IMR-90 (cell line): ENCODE measurements at regions of chr15 and their contacts with region 1.

Region 1: GRCh38 chr15:90320061-90320884 is 31.8 kb upstream of the ZNF774 start:
- DNase-seq: peak; percentile 90
- ATAC-seq: peak; percentile 98
- H3K4me3 ChIP-seq: no peak overlapping the region
- H3K27ac ChIP-seq: no peak overlapping the region
- H3K4me1 ChIP-seq: peaks cover 6% of the 10 kb centered on the region
- H3K27me3 ChIP-seq: no peaks in the 10 kb centered on the region
- CTCF ChIP-seq: peak; percentile 100
- POLR2A ChIP-seq: peak; percentile 53; the same call in 1 of the 2 replicates
- RAD21 ChIP-seq: peak; percentile 100

Region 2: GRCh38 chr15:90265271-90266060 is 54.8 kb before region 1 on chr15 and contains the start of gene NGRN:
- CTCF ChIA-PET with region 1: interaction called, 3 read pairs
- POLR2A ChIA-PET with region 1: interaction called, 13 read pairs
- dilution Hi-C with region 1: no loop called
- in situ Hi-C with region 1: no loop called
- intact Hi-C with region 1: no loop called
- DNase-seq: peak; percentile 88
- ATAC-seq: peak; percentile 92
- H3K4me3 ChIP-seq: peak within 1 kb of the TSS; percentile 90
- H3K27ac ChIP-seq: peak within 1 kb of the TSS; percentile 96
- H3K4me1 ChIP-seq: peaks cover 7% of the 10 kb centered on the region
- H3K27me3 ChIP-seq: no peaks in the 10 kb centered on the region
- CTCF ChIP-seq: no peak
- POLR2A ChIP-seq: peak; percentile 82
- RAD21 ChIP-seq: no peak
- total RNA-seq, gene NGRN: 39.6 and 44.2 TPM in 2 replicates

Region 3: DNA sequence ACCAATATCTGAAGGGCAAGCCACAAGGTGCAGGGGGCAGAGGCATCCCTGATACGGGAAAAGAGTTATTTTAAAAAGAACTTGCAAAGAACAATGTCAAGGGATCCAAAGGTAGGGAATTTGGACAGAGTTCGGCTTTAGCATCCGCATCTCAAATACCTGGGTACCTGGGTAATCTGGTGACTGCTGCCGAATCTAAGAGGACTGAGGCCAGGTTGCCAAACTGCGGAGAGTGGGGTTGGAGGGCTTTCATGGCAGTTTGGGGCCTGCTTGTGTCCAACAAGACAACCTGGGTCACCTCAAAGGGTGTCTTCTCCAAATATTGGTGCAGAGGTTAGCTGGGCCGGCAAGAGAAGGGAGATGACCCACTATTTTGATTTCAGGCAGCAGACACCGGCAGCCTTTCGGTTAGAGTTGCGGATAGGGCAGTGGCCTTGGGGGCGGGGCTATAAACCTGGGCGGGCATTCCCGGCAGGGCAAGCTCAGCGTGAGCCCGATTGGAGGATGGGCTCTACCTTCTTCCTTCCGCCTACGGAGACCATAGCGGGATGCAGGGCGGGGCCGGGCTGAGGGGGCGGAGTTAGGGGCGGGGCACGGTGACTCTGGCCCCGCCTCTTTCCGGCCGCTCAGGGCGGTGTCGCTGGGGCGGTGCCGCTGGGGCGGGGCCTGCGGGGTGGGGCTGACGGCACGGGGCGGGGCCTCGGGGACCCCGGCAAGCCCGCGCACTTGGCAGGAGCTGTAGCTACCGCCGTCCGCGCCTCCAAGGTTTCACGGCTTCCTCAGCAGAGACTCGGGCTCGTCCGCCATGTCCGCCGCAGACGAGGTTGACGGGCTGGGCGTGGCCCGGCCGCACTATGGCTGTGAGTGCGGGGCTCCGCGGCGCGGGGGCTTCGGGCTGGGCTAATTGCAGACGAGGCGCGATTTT is 67.5 kb after region 1 on chr15 and contains the start of gene IQGAP1:
- CTCF ChIA-PET with region 1: interaction called, 4 read pairs
- POLR2A ChIA-PET with region 1: no interaction called
- dilution Hi-C with region 1: no loop called
- in situ Hi-C with region 1: no loop called
- intact Hi-C with region 1: loop called (anchors 1 kb)
- DNase-seq: peak; percentile 94
- ATAC-seq: peak; percentile 98
- H3K4me3 ChIP-seq: peak within 1 kb of the TSS; percentile 80
- H3K27ac ChIP-seq: peak within 1 kb of the TSS; percentile 74
- H3K4me1 ChIP-seq: peaks cover 7% of the 10 kb centered on the region
- H3K27me3 ChIP-seq: no peaks in the 10 kb centered on the region
- CTCF ChIP-seq: no peak
- POLR2A ChIP-seq: peak; percentile 85
- RAD21 ChIP-seq: 0 out of 2 replicates have a peak, but pooled peaks have one; percentile 12
- total RNA-seq, gene IQGAP1: 207 and 246 TPM in 2 replicates

Region 4: GRCh38 chr15:90451053-90451850 is 131.0 kb after region 1 on chr15:
- CTCF ChIA-PET with region 1: no interaction called
- POLR2A ChIA-PET with region 1: no interaction called
- dilution Hi-C with region 1: no loop called
- in situ Hi-C with region 1: no loop called
- intact Hi-C with region 1: no loop called
- DNase-seq: peak; percentile 87
- ATAC-seq: peak; percentile 68
- H3K4me3 ChIP-seq: no peak overlapping the region
- H3K27ac ChIP-seq: no peak overlapping the region
- H3K4me1 ChIP-seq: peaks cover 8% of the 10 kb centered on the region
- H3K27me3 ChIP-seq: no peaks in the 10 kb centered on the region
- CTCF ChIP-seq: no peak
- POLR2A ChIP-seq: no peak
- RAD21 ChIP-seq: no peak

Region 5: DNA sequence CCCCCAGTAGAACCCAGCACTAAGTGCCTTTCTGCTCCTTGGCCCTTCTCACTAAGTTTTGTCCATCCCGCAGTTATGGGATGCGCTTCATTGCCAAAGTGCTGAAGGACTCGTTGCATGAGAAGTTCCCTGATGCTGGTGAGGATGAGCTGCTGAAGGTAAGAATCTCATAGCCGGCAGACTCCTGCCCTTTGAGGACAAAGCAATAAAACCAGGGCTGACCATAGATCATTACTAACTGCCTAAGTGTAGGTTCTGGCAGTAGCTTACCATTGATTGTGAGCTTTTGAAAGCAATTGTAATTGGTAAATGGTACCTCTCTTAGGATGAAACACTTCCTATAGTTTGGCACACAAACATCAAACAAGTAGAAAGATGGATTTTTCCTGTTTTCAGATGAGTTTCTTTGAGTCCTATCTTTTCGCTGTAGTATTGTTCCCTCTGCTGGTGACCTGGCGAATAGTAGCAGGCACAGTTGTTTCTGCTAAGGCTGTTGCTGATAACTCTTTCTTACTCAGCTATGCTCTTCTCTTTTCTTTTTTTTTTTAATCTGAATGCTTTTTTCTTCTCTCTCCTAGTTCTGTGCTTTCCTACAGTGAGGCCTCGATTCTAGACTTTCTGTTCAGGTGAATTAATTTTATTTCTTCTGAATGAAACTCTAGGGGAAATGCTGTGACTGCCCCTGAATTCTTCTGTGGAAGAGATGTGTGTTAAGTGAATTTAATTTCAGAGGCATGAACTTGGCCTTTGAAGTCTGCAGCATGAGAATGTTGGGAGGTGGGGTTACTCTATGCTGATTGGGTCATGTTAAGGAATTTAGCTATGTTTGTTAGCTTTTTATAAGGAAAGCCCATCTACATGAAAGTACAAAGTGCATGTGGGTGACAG is 162.1 kb after region 1 on chr15:
- CTCF ChIA-PET with region 1: interaction called, 34 read pairs
- POLR2A ChIA-PET with region 1: interaction called, 4 read pairs
- dilution Hi-C with region 1: no loop called
- in situ Hi-C with region 1: no loop called
- intact Hi-C with region 1: loop called (anchors 1 kb)
- DNase-seq: peak; percentile 66
- ATAC-seq: peak; percentile 80
- H3K4me3 ChIP-seq: no peak overlapping the region
- H3K27ac ChIP-seq: no peak overlapping the region
- H3K4me1 ChIP-seq: no peaks in the 10 kb centered on the region
- H3K27me3 ChIP-seq: no peaks in the 10 kb centered on the region
- CTCF ChIP-seq: peak; percentile 77
- POLR2A ChIP-seq: no peak
- RAD21 ChIP-seq: peak; percentile 89

Region 6: DNA sequence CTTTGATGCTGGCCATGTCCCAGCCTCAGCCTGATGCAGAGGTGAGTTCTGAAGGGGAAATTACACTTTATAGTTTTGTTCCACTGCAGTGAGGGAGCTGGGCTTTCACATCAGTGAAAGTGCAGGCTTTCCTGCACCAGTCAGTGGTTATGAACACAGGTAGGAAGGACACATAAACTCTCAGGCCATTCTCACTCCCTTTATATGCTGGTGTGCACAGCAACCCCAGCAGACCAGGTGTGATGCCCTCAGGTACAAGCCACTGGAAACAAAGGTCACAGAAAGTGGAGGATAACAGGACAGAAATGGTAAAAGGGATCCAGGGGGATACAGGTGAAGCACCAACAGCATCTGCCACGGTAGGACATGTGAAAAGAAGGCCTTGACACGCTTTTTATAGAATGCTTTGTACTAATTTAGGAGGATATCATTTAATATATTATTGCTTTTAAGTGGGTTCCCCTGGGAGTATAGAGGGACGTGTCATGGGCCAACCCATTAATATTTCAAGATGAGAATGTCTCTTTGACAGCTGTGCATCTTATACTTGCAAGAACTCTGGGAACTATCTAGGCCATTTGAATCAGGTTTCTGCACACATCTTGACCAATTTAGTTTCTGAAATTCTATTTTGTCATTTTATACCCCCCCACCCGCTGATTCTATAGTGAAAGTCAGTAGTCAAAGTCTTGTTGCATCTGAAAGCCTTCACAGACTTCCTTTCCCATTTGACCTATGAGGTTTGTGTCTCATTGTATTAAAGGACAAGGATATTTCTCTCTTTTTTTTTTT is 371.9 kb after region 1 on chr15:
- CTCF ChIA-PET with region 1: no interaction called
- POLR2A ChIA-PET with region 1: no interaction called
- dilution Hi-C with region 1: no loop called
- in situ Hi-C with region 1: no loop called
- intact Hi-C with region 1: loop called (anchors 5 kb)
- DNase-seq: no peak
- ATAC-seq: no peak
- H3K4me3 ChIP-seq: no peak overlapping the region
- H3K27ac ChIP-seq: no peak overlapping the region
- H3K4me1 ChIP-seq: no peaks in the 10 kb centered on the region
- H3K27me3 ChIP-seq: no peaks in the 10 kb centered on the region
- CTCF ChIP-seq: no peak
- POLR2A ChIP-seq: no peak
- RAD21 ChIP-seq: no peak

Region 7: DNA sequence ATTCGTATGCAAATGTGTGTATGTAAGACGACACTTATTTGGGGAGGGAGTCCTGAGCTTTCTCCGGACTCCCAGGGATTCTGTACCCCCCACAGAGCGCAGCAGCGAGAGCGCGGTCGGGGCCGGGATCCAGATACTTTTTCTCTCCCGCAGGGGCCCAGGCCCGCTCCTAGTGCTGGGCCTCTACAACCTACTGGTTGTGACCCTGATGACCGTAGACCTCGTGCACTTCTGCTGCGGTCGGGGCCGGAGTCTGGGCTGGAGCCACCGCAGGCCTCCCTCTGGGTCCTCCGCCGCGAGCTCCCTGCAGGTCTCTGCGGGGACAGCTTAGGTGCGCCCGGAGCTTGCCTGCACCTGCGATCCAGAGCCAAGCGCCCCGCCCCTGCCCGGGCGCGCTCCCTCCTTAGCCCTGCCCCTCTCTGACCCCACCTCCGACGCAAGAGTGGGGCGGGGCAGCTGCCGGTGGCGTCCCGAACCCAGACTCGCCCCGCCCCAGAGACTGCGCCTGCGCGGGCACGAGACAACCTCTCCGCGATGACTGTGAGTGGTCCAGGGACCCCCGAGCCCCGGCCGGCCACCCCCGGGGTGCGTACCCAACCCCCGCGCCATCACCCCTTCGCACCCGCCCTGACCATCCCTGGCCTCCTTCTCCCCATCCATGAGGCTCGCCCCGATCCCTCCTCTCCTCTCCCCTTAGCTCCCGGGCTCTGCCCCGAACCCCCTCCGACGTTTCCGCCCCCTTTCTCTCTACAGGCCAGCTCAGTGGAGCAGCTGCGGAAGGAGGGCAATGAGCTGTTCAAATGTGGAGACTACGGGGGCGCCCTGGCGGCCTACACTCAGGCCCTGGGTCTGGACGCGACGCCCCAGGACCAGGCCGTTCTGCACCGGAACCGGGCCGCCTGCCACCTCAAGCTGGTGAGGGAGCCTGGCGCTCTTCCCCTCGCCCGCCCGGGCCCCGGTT is 614.8 kb after region 1 on chr15 and contains the start of gene UNC45A:
- CTCF ChIA-PET with region 1: interaction called, 4 read pairs
- POLR2A ChIA-PET with region 1: no interaction called
- dilution Hi-C with region 1: no loop called
- in situ Hi-C with region 1: no loop called
- intact Hi-C with region 1: loop called (anchors 1 kb)
- DNase-seq: peak; percentile 77
- ATAC-seq: peak; percentile 89
- H3K4me3 ChIP-seq: peak within 1 kb of the TSS; percentile 76
- H3K27ac ChIP-seq: peak within 1 kb of the TSS; percentile 79
- H3K4me1 ChIP-seq: peaks cover 9% of the 10 kb centered on the region
- H3K27me3 ChIP-seq: no peaks in the 10 kb centered on the region
- CTCF ChIP-seq: no peak
- POLR2A ChIP-seq: 0 out of 2 replicates have a peak, but pooled peaks have one; percentile 62
- RAD21 ChIP-seq: no peak
- total RNA-seq, gene UNC45A: 85.3 and 100 TPM in 2 replicates